ENCODE measurements at regions of chr11 and their contacts with region 1.

Region 1: DNA sequence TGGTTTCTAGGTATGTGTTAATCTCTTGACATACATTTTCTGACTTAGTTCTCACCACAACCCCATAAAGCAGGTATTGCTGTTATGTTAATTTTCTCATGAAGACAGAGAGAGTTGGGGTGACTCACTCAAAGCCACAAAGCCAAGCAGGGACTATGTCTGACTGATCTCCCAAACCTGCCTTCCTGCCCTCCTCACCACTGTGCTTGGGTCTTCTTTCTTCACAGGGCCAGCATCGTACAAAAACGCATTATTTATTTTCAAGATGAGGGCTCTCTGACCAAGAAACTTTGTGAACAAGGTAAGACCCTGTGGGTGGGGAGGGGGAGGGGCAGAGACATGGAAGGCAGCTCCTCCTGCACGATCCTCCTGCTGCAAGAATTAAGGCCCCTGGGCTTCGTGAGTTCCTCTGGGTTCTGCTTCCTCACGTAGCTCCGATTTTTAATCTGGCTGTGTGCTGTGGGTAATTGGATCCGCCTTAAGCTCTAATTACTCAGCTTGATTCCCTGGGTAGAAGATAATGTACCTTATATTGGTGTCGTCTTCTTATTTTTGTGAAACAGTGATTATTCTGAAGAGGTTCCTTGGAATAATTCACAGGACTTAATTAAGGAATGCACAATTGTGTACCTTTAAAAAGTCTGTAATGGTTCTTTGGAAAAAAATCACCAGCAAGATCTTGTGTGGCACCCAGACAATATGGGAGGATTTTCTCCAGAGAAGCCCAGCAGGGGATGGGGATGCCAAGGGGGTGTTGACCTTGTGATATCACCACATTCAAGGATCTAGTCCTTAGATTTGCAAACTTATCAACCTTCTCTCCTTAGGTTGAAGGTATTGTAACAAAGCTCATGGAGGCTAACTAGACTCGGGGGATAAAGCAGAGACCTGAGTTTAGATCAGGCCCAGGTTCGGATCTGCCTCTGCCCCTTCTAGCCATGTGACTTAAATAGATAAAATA is 112.9 kb downstream of the SPON1 start:
- DNase-seq: no peak
- H3K4me3 ChIP-seq: no peak overlapping the region
- H3K27ac ChIP-seq: no peak overlapping the region
- H3K4me1 ChIP-seq: peaks cover 37% of the 10 kb centered on the region
- CTCF ChIP-seq: no peak

Region 2: GRCh38 chr11:12390687-12391110 is 1684.7 kb before region 1 on chr11:
- CTCF ChIA-PET with region 1: no interaction called
- POLR2A ChIA-PET with region 1: no interaction called
- intact Hi-C with region 1: no loop called
- DNase-seq: no peak
- H3K4me3 ChIP-seq: no peak overlapping the region
- H3K27ac ChIP-seq: no peak overlapping the region
- H3K4me1 ChIP-seq: no peaks in the 10 kb centered on the region
- CTCF ChIP-seq: no peak

Region 3: DNA sequence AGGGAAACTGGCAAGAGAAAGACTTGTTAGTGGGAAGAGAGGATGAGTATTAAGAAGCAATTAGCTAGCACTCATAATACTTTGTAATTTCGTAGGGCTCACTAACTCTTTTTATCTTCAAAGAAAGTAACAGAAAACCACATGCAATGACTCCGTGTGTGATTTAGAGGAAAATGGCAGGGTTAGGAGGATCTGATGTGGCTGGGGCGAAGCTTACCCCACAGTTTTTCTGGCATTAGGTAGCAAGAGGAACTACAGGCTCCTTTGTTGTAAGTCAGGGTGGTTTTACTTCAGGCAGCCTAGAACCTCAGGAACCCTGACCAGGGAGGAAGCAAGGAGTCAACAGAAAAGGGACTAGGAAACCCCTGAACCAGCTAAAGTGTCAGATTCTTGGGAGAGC is 23.2 kb before region 1 on chr11:
- CTCF ChIA-PET with region 1: no interaction called
- POLR2A ChIA-PET with region 1: interaction called, 5 read pairs
- intact Hi-C with region 1: loop called (anchors 2 kb)
- DNase-seq: no peak
- H3K4me3 ChIP-seq: no peak overlapping the region
- H3K27ac ChIP-seq: no peak overlapping the region
- H3K4me1 ChIP-seq: peaks cover 7% of the 10 kb centered on the region
- CTCF ChIP-seq: no peak